ENCODE measurements at regions of chr17 and their contacts with region 1.

Region 1: DNA sequence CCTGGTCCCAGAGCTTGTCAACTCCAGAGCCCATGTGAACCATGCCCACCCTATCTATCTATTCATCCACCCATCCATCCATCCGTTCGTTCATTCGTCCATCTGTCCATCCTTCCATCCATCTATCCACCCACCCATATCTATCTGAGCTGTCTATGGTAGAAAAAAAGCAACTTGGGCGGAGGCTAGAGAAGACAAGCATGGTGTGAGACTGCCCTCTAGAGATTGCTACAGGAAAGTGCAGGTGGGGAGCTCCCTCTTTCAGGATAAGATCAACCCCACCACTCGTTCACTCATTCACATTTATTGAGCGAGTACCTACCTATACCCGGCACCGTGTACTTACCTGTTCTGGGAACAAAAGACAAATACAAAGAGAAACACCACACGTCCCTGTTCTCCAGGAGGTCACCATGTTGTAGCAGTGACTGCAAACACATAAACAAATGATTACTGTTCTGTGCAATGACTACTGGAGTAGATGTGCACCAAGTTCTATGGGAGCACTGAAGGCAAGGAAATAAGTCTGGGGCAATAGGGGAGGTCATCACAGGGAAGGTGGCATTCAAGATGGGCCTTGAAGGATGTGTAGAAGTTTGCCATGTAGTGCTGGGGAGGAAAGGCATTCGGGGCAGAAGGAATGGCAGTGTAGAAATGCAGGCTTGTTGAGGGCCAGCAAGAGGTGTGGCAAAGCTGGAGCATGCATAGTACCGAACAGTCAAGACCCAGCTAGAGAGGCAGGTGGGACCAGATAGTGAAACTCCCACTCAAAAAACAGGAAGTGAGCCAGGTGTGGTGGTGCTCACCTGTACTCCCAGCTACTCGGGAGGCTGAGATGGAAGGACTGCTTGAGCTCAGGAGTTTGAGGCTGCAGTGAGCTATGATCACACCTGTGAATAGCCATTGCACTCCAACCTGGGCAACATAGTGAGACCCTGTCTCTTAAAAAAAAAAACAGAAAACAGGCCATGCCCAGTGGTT is 13.4 kb upstream of the ATP5MC1 start:
- DNase-seq: peak; percentile 55
- ATAC-seq: peak; percentile 89
- H3K4me3 ChIP-seq: no peak overlapping the region
- H3K27ac ChIP-seq: no peak overlapping the region
- H3K4me1 ChIP-seq: peaks cover 23% of the 10 kb centered on the region
- H3K27me3 ChIP-seq: no peaks in the 10 kb centered on the region
- CTCF ChIP-seq: peak; percentile 93 to 99 (median 98); a peak in 5 of 6 replicates
- EP300 ChIP-seq: no peak
- POLR2A ChIP-seq: no peak
- RAD21 ChIP-seq: peak; percentile 99

Region 2: GRCh38 chr17:48577946-48578615 is 301.1 kb before region 1 on chr17 and contains the start of gene HOXB4:
- CTCF ChIA-PET with region 1: no interaction called
- POLR2A ChIA-PET with region 1: no interaction called
- RAD21 ChIA-PET with region 1: no interaction called
- SMC1A ChIA-PET with region 1: no interaction called
- in situ Hi-C with region 1: no loop called
- intact Hi-C with region 1: no loop called
- DNase-seq: peak; percentile 43
- ATAC-seq: peak; percentile 80
- H3K4me3 ChIP-seq: peak within 1 kb of the TSS; percentile 93
- H3K27ac ChIP-seq: peak within 1 kb of the TSS; percentile 57
- H3K4me1 ChIP-seq: peaks cover 23% of the 10 kb centered on the region
- H3K27me3 ChIP-seq: no peaks in the 10 kb centered on the region
- CTCF ChIP-seq: no peak
- EP300 ChIP-seq: no peak
- POLR2A ChIP-seq: peak; percentile 62
- RAD21 ChIP-seq: no peak
- polyA plus RNA-seq, gene HOXB4: 0.35 to 0.60 TPM

Region 3: DNA sequence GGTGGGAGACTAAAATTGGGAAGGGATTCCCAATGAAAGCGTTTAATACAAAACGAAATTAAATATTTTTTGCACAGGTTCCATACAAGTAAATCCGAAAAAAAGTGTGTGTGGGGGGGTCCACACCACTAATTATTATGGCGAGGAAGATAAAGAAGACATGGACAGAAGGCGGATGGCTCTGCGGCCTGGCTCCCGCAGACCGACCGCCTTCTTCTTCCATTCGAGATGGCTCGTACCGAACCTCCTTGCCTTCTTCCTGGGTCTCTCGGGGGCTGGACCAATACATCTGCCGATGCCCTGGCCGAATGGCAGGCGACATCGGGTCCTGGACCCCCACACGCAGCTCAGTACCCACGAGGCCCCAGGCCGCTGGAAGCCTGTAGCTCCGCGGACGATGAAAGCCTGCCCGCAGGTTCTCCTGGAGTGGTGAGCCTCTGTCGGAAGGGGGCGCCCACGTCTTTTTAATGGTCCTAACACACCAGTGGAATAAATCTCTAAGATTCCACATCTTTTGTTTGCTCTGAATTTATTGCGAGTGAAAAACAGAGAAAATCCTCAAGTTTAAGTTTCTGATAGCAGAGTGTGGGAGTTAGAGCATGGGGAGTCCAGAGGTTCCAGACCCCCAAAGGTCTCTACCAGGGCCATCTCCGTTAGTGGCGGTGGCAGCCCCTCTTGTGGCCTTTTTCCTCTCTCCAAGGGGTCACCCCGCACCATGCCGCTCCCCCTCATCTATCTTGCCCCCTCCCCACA is 154.8 kb before region 1 on chr17:
- CTCF ChIA-PET with region 1: interaction called, 108 read pairs
- POLR2A ChIA-PET with region 1: no interaction called
- RAD21 ChIA-PET with region 1: interaction called, 67 read pairs
- SMC1A ChIA-PET with region 1: interaction called, 26 read pairs
- in situ Hi-C with region 1: loop called (anchors 5 kb)
- intact Hi-C with region 1: loop called (anchors 1 kb)
- DNase-seq: peak; percentile 3
- ATAC-seq: peak; percentile 94
- H3K4me3 ChIP-seq: no peak overlapping the region
- H3K27ac ChIP-seq: no peak overlapping the region
- H3K4me1 ChIP-seq: no peaks in the 10 kb centered on the region; the same call in 1 of the 2 replicates
- H3K27me3 ChIP-seq: peaks cover 34 to 58% of the 10 kb centered on the region in 2 experiments
- CTCF ChIP-seq: peak; percentile 60 to 75 (median 73)
- EP300 ChIP-seq: no peak
- POLR2A ChIP-seq: no peak
- RAD21 ChIP-seq: peak; percentile 83

Region 4: DNA sequence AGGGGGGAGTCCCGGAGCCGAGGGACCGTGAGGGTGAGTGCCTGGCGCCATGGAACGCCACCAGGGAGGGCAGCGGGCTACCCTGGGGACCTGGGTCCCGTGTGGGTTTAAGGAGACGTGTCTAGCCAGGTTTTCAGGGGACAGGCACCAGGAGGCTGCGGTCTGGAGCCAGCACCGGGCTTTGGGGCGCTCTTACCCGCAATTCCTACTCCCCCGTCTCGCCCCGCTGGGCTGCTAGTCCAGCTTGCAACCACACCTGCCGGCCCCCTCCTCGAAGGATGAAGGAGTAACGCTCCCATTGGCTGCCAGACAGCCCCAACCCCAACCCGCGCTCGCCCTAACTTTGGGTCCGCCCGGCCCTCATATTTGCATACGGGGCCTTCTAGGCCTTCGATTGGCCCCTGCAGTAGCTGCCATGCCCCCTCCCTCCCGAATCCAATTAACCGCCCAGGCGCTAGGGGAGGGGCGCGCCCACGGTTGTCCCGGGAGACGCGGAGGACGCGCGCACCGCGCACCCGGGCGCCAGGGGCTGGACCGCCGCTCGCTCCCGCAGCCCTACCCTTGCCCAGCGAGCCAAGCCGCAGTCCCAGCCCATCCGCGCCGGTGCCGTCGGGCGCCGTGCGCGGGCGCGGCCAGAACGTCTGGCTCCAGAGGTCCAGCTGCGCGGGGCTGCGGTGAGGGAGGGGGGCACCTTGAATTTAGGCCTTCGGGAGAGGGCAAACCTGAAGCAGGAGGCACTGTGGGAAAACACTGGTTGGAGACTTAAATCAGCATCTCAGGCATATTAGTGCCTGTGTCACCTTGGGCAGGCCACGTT is 62.2 kb before region 1 on chr17 and contains the start of gene TTLL6:
- CTCF ChIA-PET with region 1: interaction called, 490 read pairs
- POLR2A ChIA-PET with region 1: interaction called, 4 read pairs
- RAD21 ChIA-PET with region 1: interaction called, 376 read pairs
- SMC1A ChIA-PET with region 1: interaction called, 281 read pairs
- in situ Hi-C with region 1: loop called (anchors 5 kb)
- intact Hi-C with region 1: loop called (anchors 1 kb)
- DNase-seq: no peak
- ATAC-seq: peak; percentile 97
- H3K4me3 ChIP-seq: peak within 1 kb of the TSS; percentile 58
- H3K27ac ChIP-seq: no peak within 1 kb of the TSS
- H3K4me1 ChIP-seq: peaks cover 12% of the 10 kb centered on the region
- H3K27me3 ChIP-seq: peaks cover 0 to 6% of the 10 kb centered on the region in 2 experiments; a peak in 1 of 4 replicates
- CTCF ChIP-seq: no peak
- EP300 ChIP-seq: no peak
- POLR2A ChIP-seq: no peak
- RAD21 ChIP-seq: no peak
- polyA plus RNA-seq, gene TTLL6: not detected

Region 5: GRCh38 chr17:48841395-48841831 is 37.8 kb before region 1 on chr17:
- CTCF ChIA-PET with region 1: interaction called, 47 read pairs
- POLR2A ChIA-PET with region 1: interaction called, 3 read pairs
- RAD21 ChIA-PET with region 1: interaction called, 15 read pairs
- SMC1A ChIA-PET with region 1: interaction called, 24 read pairs
- in situ Hi-C with region 1: no loop called
- intact Hi-C with region 1: no loop called
- DNase-seq: peak; percentile 83
- ATAC-seq: peak; percentile 91
- H3K4me3 ChIP-seq: peak overlapping the region; percentile 60
- H3K27ac ChIP-seq: peak overlapping the region; percentile 71
- H3K4me1 ChIP-seq: peaks cover 33% of the 10 kb centered on the region
- H3K27me3 ChIP-seq: no peaks in the 10 kb centered on the region
- CTCF ChIP-seq: no peak
- EP300 ChIP-seq: peak in 1 of 2 experiments; percentile 77; a peak in 1 of 4 replicates
- POLR2A ChIP-seq: no peak
- RAD21 ChIP-seq: no peak

Region 6: GRCh38 chr17:48892940-48893645 is 13.9 kb after region 1 on chr17:
- CTCF ChIA-PET with region 1: interaction called, 22 read pairs
- POLR2A ChIA-PET with region 1: interaction called, 13 read pairs
- RAD21 ChIA-PET with region 1: interaction called, 7 read pairs
- SMC1A ChIA-PET with region 1: interaction called, 10 read pairs
- in situ Hi-C with region 1: no loop called
- intact Hi-C with region 1: no loop called
- DNase-seq: no peak
- ATAC-seq: no peak; the same call in 2 of the 3 replicates
- H3K4me3 ChIP-seq: peak overlapping the region; percentile 76
- H3K27ac ChIP-seq: peak overlapping the region; percentile 75
- H3K4me1 ChIP-seq: peaks cover 3% of the 10 kb centered on the region; the same call in 1 of the 2 replicates
- H3K27me3 ChIP-seq: no peaks in the 10 kb centered on the region
- CTCF ChIP-seq: no peak
- EP300 ChIP-seq: no peak
- POLR2A ChIP-seq: no peak
- RAD21 ChIP-seq: no peak

Region 7: GRCh38 chr17:49039043-49039442 is 159.8 kb after region 1 on chr17:
- CTCF ChIA-PET with region 1: interaction called, 115 read pairs
- POLR2A ChIA-PET with region 1: no interaction called
- RAD21 ChIA-PET with region 1: interaction called, 15 read pairs
- SMC1A ChIA-PET with region 1: interaction called, 17 read pairs
- in situ Hi-C with region 1: loop called (anchors 5 kb)
- intact Hi-C with region 1: no loop called
- DNase-seq: no peak
- ATAC-seq: no peak
- H3K4me3 ChIP-seq: no peak overlapping the region
- H3K27ac ChIP-seq: no peak overlapping the region
- H3K4me1 ChIP-seq: no peaks in the 10 kb centered on the region
- H3K27me3 ChIP-seq: peaks cover 0 to 4% of the 10 kb centered on the region in 2 experiments; a peak in 2 of 4 replicates
- CTCF ChIP-seq: no peak
- EP300 ChIP-seq: no peak
- POLR2A ChIP-seq: no peak
- RAD21 ChIP-seq: no peak

Region 8: DNA sequence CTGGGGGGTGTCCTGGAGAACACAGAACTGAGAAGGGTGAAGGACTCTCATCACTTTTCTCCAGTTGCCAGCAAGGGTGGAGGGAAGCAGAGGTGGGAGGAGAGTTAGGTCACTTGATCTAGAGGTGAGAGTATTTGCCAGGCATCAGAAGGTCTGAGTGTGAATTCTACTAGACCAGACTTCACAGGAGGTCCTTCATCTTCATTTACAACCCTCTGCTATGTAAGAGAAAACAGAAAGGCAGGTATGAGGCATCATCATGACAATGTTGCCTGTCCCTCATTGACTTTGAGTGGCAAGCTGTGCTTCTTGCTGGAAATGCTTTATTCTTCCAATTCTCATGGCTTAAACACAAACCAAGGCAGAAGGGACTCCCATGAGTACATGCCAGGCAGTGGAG is 207.4 kb after region 1 on chr17:
- CTCF ChIA-PET with region 1: no interaction called
- POLR2A ChIA-PET with region 1: no interaction called
- RAD21 ChIA-PET with region 1: no interaction called
- SMC1A ChIA-PET with region 1: no interaction called
- in situ Hi-C with region 1: no loop called
- intact Hi-C with region 1: no loop called
- DNase-seq: no peak
- ATAC-seq: no peak
- H3K4me3 ChIP-seq: no peak overlapping the region
- H3K27ac ChIP-seq: no peak overlapping the region
- H3K4me1 ChIP-seq: no peaks in the 10 kb centered on the region
- H3K27me3 ChIP-seq: no peaks in the 10 kb centered on the region; a peak in 2 of 4 replicates
- CTCF ChIP-seq: no peak
- EP300 ChIP-seq: no peak
- POLR2A ChIP-seq: no peak
- RAD21 ChIP-seq: no peak